ENCODE measurements at regions of chr14 and their contacts with region 1.

Region 1: DNA sequence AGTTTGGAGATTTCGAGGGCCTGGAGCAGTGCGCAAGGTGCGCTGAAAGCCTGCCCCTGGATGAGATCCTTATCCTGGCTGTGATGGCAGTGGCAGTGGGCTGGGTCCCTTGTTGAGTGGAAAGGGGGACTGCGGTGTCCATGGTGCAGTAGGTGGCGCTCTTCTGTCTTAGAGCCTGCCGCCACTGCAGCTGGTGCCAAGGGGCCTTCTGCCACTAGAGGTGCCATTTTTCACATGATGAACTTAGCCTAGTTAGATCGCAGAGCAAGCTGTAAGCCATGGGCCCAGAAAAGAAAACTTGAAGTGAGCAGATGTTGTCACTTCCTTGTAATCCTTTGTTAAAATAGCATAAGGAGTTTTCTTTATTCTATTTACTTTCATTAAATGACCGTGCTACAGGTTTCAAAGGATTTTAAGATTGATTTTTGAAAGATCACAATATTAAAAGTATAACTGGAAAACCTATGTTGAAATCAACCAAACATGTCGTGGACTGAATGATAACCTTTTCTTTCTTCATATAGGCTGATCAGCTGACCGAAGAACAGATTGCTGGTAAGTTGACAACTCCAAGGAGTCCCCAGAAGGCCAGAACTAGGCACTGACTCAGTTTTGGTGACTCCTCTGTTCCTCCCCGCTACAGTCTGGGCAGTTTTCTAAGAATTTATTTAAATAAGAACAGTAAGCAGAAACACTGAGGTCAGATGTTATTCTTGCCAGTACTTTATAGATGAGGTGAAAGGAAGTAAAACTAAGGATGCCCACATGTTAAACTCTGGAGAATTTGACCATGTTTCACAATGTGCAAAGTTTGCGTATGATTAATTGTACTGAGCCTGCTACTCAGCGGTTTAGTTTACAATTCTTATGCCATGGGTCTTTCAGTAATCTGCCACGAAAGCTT is 3.0 kb downstream of the CALM1 start:
- DNase-seq: peak; percentile 88 to 94
- ATAC-seq: peak; percentile 73 to 80 (median 76)
- H3K4me3 ChIP-seq: peak overlapping the region; percentile 87
- H3K27ac ChIP-seq: peak overlapping the region; percentile 92
- H3K4me1 ChIP-seq: peaks cover 52% of the 10 kb centered on the region
- H3K27me3 ChIP-seq: no peaks in the 10 kb centered on the region
- CTCF ChIP-seq: peak; percentile 98

Region 2: DNA sequence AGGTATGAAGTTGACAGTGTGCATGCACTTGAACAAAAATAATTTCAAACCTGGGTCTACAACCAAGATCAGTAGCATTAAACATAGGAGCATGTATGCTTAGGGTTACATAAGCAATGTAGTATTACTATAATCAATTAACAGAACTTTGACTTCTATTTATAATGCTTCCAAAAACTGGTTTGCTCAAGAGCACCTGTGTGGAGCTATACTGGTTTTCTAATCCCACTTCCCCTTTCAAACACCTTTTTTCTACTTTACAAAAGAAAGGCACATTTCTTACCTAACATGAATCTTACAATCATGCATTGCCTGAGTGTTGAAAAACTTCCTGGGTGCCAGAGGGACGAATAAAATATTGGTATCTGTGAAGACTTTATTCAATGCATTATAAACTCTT is 518.0 kb before region 1 on chr14:
- intact Hi-C with region 1: no loop called
- DNase-seq: no peak
- ATAC-seq: no peak
- H3K4me3 ChIP-seq: no peak overlapping the region
- H3K27ac ChIP-seq: no peak overlapping the region
- H3K4me1 ChIP-seq: no peaks in the 10 kb centered on the region
- H3K27me3 ChIP-seq: no peaks in the 10 kb centered on the region
- CTCF ChIP-seq: no peak

Region 3: GRCh38 chr14:90301668-90302090 is 98.1 kb before region 1 on chr14:
- intact Hi-C with region 1: loop called in 1 of 2 experiments (anchors 5 kb)
- DNase-seq: no peak
- ATAC-seq: peak; percentile 43 to 73 (median 64)
- H3K4me3 ChIP-seq: no peak overlapping the region
- H3K27ac ChIP-seq: peak overlapping the region; percentile 74
- H3K4me1 ChIP-seq: peaks cover 34% of the 10 kb centered on the region
- H3K27me3 ChIP-seq: no peaks in the 10 kb centered on the region
- CTCF ChIP-seq: peak; percentile 66

Region 4: DNA sequence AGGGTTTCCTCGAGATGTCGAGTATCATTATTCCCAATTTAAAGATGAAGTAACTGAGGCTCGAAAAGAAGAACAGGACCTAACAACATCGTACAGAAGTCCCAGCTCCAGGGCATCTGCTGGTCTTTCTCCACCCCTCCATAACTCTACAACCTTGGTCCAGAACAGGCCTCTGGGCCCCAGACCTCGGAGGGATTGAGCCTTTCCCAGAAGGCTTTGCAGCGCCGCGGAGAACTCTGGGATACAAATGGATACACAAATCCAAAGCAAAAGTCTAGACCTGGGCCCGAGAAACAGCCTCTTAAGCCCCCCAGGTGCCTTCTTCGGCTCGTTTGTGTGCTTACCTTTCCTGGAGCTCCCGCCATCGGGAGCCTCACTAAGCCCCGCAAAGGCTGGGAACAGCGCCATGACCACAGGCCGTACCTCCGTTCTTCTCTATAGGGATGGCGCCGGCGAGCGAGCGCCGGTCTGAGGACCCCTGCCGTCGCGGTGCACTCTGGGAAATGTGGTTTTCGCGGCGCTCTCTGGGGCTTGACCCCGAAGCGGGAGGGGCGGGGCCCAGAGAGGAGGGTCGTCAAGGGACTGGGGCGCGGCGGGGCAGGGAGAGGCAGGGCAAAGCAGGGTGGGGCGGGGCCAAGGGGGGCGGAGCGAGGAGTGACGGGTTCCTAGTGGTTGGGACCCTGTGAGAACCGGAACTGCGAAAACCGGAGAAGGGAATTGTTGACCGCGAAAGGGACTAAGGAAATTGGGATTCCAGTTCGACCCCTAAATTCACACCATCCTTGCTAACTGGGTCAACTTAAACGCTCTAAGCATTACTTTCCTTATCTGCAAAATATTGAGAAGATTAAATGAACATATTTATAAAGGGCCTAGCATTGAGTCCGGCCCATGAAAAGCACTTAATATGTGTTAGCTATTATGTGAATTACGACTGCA is 68.0 kb before region 1 on chr14 and contains the start of gene NRDE2:
- intact Hi-C with region 1: loop called in 1 of 2 experiments (anchors 5 kb)
- DNase-seq: peak; percentile 100
- ATAC-seq: peak; percentile 98 to 100 (median 100)
- H3K4me3 ChIP-seq: peak within 1 kb of the TSS; percentile 76
- H3K27ac ChIP-seq: peak within 1 kb of the TSS; percentile 88
- H3K4me1 ChIP-seq: peaks cover 12% of the 10 kb centered on the region
- H3K27me3 ChIP-seq: peaks cover 0 to 15% (median 0%) of the 10 kb centered on the region in 3 donors
- CTCF ChIP-seq: no peak
- total RNA-seq, gene NRDE2: 11.0 to 21.8 (median 12.8) TPM

Region 5: GRCh38 chr14:90355540-90356518 is 44.0 kb before region 1 on chr14:
- intact Hi-C with region 1: no loop called
- DNase-seq: no peak
- ATAC-seq: no peak
- H3K4me3 ChIP-seq: no peak overlapping the region
- H3K27ac ChIP-seq: no peak overlapping the region
- H3K4me1 ChIP-seq: no peaks in the 10 kb centered on the region
- H3K27me3 ChIP-seq: no peaks in the 10 kb centered on the region
- CTCF ChIP-seq: no peak

Region 6: DNA sequence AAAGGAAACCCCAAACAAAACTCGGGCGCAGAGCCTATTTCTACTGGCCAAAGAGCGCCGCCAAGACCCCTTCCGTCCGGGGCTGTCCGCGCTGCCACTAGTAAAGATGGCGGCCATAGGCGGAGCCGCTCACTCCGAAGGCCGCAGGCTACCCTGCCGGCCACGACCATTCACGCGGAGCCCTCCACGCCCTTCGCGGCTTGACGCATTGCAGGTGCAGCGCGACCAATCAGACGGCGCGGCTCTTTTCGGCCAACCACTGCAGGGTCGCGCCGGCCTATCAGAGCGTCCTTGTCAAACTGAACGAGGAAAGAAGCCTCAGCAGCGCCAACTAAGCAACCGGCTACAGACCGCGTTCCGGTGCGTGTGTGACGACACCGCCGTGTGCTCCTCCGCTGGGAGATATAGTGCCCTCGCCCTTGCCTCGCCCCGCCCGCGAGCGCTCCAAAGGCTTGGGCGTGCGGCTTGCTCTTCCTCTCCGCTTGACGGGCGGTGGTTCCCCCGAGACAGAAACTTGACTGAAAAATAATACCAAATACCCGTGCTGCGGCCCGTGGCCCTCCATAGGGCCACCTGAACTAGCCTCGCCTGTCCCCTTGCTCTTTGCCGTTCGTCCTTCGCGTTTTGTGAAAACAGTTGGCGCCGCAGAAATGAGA is 16.6 kb before region 1 on chr14:
- intact Hi-C with region 1: loop called (anchors 1 to 2 kb)
- DNase-seq: peak; percentile 100
- ATAC-seq: peak; percentile 85 to 92 (median 90)
- H3K4me3 ChIP-seq: peak overlapping the region; percentile 76
- H3K27ac ChIP-seq: peak overlapping the region; percentile 100
- H3K4me1 ChIP-seq: peaks cover 30% of the 10 kb centered on the region
- H3K27me3 ChIP-seq: no peaks in the 10 kb centered on the region
- CTCF ChIP-seq: no peak

Region 7: GRCh38 chr14:90624728-90625400 is 225.1 kb after region 1 on chr14:
- intact Hi-C with region 1: loop called in 1 of 2 experiments (anchors 5 kb)
- DNase-seq: no peak
- ATAC-seq: peak; percentile 57 to 67 (median 64)
- H3K4me3 ChIP-seq: peak overlapping the region; percentile 26
- H3K27ac ChIP-seq: peak overlapping the region; percentile 94
- H3K4me1 ChIP-seq: peaks cover 55% of the 10 kb centered on the region
- H3K27me3 ChIP-seq: no peaks in the 10 kb centered on the region
- CTCF ChIP-seq: no peak

Measured in psoas muscle (tissue), 8 donors.